OCI-LY7 (cell line): ENCODE measurements at regions of chr4 and their contacts with region 1.

Region 1: DNA sequence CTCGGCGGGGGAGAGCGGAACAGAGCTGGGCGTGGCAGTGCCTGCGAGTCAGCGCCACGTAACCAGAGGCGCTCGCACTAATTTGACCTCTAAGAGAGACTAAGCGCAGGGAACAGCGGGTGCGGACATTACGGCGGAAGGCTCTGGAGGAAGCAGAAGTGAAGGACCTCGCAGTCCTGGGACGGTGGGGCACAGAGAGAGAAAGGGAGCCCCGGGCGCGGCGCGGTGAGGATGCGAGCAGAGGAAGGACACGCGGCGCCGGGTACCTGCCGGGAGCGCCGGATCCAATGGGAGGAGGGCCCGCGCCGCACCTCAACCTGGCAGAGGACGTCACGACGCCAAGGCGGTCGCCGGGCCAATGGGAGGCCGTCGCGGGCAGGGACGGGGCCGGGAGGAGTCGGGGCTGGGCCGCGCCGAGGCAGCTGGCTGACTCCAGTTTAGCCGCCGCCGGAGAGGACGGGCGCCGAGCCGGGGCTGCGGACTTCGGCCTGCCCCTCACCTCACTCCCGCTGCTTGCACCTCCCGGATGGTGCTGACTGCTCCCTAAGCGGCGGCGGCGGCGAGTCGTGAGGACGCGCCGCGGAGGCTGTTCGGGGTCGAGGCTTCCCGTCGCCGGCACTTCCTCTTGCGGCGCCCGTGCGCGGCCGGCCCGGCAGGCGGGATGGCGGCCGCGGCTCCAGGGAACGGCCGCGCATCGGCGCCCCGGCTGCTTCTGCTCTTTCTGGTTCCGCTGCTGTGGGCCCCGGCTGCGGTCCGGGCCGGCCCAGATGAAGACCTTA is at the start of gene TMEM165:
- DNase-seq: peak; percentile 91
- H3K4me3 ChIP-seq: peak within 1 kb of the TSS; percentile 99
- H3K27ac ChIP-seq: peak within 1 kb of the TSS; percentile 81
- H3K4me1 ChIP-seq: peaks cover 37% of the 10 kb centered on the region
- CTCF ChIP-seq: no peak
- total RNA-seq, gene TMEM165: 67.1 and 70.8 TPM in 2 replicates

Region 2: GRCh38 chr4:55345980-55346850 is 49.5 kb before region 1 on chr4 and contains the start of gene SRD5A3:
- CTCF ChIA-PET with region 1: interaction called, 4 read pairs
- POLR2A ChIA-PET with region 1: interaction called, 14 read pairs
- intact Hi-C with region 1: loop called (anchors 1 kb)
- DNase-seq: peak; percentile 87
- H3K4me3 ChIP-seq: peak within 1 kb of the TSS; percentile 78
- H3K27ac ChIP-seq: peak within 1 kb of the TSS; percentile 60
- H3K4me1 ChIP-seq: peaks cover 15% of the 10 kb centered on the region
- CTCF ChIP-seq: peak; percentile 88
- total RNA-seq, gene SRD5A3: 3.9 and 5.9 TPM in 2 replicates

Region 3: DNA sequence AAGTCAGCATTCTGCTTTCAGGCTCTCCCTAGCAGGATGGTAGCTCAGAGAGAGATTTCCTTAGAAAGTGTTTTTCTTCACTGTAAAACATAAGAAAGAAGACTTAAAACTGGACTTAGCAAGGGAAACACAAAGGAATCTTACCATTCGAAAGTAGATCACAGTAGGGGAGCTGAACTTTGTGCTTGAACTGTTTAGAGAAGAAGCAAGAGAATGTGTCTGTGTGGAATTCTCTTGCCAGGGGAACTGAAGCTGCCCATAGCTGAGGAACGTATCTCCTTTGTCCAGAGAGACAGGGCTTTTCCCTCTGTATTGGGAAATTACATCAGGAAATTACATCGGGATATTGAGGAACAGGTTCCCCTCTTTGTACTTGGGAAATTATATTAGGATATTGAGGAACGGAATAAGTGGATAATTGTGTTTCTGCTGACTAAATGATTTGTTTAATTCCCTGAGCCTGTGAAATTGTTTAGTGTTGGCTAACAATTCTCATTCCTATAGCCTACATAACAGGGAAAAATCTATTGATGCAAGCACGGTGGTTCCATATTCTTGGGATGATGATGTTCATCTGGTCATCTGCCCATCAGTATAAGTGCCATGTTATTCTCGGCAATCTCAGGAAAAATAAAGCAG is 28.5 kb before region 1 on chr4:
- CTCF ChIA-PET with region 1: no interaction called
- POLR2A ChIA-PET with region 1: interaction called, 10 read pairs
- intact Hi-C with region 1: no loop called
- DNase-seq: no peak
- H3K4me3 ChIP-seq: no peak overlapping the region
- H3K27ac ChIP-seq: no peak overlapping the region
- H3K4me1 ChIP-seq: peaks cover 6% of the 10 kb centered on the region
- CTCF ChIP-seq: no peak

Region 4: GRCh38 chr4:55409468-55410171 is 13.9 kb after region 1 on chr4:
- CTCF ChIA-PET with region 1: interaction called, 6 read pairs
- POLR2A ChIA-PET with region 1: interaction called, 25 read pairs
- intact Hi-C with region 1: no loop called
- DNase-seq: peak; percentile 52
- H3K4me3 ChIP-seq: no peak overlapping the region
- H3K27ac ChIP-seq: peak overlapping the region; percentile 18
- H3K4me1 ChIP-seq: peaks cover 23% of the 10 kb centered on the region
- CTCF ChIP-seq: peak; percentile 68

Region 5: GRCh38 chr4:55424791-55425190 is 29.1 kb after region 1 on chr4:
- CTCF ChIA-PET with region 1: no interaction called
- POLR2A ChIA-PET with region 1: interaction called, 15 read pairs
- intact Hi-C with region 1: no loop called
- DNase-seq: no peak
- H3K4me3 ChIP-seq: no peak overlapping the region
- H3K27ac ChIP-seq: no peak overlapping the region
- H3K4me1 ChIP-seq: no peaks in the 10 kb centered on the region
- CTCF ChIP-seq: no peak

Region 6: GRCh38 chr4:55546756-55547465 is 151.2 kb after region 1 on chr4 and contains the start of gene CLOCK:
- CTCF ChIA-PET with region 1: interaction called, 3 read pairs
- POLR2A ChIA-PET with region 1: interaction called, 20 read pairs
- intact Hi-C with region 1: loop called (anchors 1 kb)
- DNase-seq: peak; percentile 86
- H3K4me3 ChIP-seq: peak within 1 kb of the TSS; percentile 79
- H3K27ac ChIP-seq: peak within 1 kb of the TSS; percentile 45
- H3K4me1 ChIP-seq: peaks cover 7% of the 10 kb centered on the region
- CTCF ChIP-seq: peak; percentile 68
- total RNA-seq, gene CLOCK: 1.9 and 2.0 TPM in 2 replicates

Region 7: GRCh38 chr4:55661398-55662056 is 265.8 kb after region 1 on chr4:
- CTCF ChIA-PET with region 1: no interaction called
- POLR2A ChIA-PET with region 1: no interaction called
- intact Hi-C with region 1: no loop called
- DNase-seq: no peak
- H3K4me3 ChIP-seq: no peak overlapping the region
- H3K27ac ChIP-seq: no peak overlapping the region
- H3K4me1 ChIP-seq: no peaks in the 10 kb centered on the region
- CTCF ChIP-seq: no peak

Region 8: DNA sequence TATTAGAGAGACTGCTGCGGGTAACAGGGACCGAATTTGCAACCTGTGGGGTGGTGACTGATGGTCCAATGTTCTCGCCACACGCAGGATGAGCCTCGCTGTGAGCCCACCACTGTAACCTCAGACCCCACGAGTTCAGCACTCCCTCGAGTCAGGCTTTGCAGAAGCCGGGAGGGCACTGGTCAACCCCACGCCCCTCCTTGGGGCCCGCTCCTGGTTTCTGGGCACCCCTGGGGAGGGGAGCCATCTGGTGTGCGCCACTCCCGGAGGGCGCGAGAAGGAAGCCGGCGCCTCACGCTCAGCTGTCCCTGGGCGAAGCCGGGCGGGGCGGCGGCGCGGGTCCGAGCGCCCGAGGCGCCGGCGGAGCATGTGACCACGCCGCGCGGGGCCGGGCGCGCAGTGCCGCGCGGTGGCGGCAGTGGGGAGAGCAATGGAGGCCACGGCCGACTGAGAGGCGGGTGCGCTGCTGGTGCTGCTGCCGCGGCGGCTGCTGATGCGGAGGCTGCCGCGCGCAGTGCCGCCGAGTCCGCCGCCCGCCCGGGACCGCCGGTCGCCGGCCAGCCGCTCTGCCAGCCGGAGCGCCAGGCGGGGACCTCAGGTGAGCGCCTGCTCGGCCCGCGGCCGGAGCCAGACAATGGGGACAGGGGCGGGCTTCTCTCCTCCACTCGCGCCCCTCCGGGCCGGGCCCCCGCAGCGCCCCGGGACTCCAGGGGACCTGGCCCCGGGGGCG is 653.1 kb after region 1 on chr4:
- CTCF ChIA-PET with region 1: no interaction called
- POLR2A ChIA-PET with region 1: no interaction called
- intact Hi-C with region 1: loop called (anchors 10 kb)
- DNase-seq: peak; percentile 89
- H3K4me3 ChIP-seq: peak overlapping the region; percentile 81
- H3K27ac ChIP-seq: peak overlapping the region; percentile 72
- H3K4me1 ChIP-seq: peaks cover 31% of the 10 kb centered on the region
- CTCF ChIP-seq: no peak; the same call in 1 of the 2 replicates